Transverse colon (tissue), 4 donors: ENCODE measurements at regions of chr1 and their contacts with region 1.

Region 1: DNA sequence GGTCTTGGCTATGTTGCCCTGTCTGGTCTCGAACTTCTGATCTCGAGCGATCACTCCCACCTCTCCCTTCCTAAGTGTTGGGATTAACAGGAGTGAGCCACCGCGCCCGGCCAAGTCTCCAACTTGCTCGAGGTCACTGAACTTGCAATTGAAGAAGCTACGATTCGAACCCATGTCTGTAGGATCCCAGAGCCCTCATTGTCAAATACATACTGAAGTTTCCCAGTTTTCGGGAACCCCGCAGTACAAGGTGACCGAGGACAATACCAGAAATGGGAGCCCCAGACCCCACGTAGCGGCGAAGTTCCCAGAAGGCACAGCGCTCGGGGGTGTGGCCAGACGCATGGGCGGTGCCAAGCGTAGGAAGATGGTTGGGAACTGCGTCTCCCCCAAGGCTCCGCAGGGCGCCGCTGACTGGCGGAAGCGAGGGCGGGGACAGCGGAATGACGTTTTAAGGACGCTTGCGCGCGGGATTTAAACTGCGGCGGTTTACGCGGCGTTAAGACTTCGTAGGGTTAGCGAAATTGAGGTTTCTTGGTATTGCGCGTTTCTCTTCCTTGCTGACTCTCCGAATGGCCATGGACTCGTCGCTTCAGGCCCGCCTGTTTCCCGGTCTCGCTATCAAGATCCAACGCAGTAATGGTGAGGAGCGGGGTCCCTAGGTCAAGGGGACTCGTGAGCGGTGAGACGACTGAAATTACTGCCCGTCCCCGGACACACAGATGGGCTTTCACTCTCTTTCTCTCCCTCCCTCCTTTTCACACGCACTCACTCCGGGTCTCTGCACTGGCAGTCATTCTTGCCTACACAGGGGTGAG is at the start of gene KIF2C:
- DNase-seq: peak; percentile 98
- H3K4me3 ChIP-seq: peak within 1 kb of the TSS; percentile 44 to 62 (median 50)
- H3K27ac ChIP-seq: peak within 1 kb of the TSS; percentile 86 to 91 (median 91)
- H3K4me1 ChIP-seq: peaks cover 6 to 10% (median 8%) of the 10 kb centered on the region in 4 donors
- H3K27me3 ChIP-seq: no peaks in the 10 kb centered on the region
- CTCF ChIP-seq: peak in 2 of 5 experiments; percentile 4 to 7
- EP300 ChIP-seq: no peak
- POLR2A ChIP-seq: peak; percentile 69
- total RNA-seq, gene KIF2C: 0.95 to 8.0 (median 1.9) TPM in 3 of 4 donors, not detected in the other

Region 2: GRCh38 chr1:44807262-44808062 is 67.9 kb after region 1 on chr1 and contains the start of gene DYNLT4:
- in situ Hi-C with region 1: no loop called
- intact Hi-C with region 1: loop called (anchors 2 kb)
- DNase-seq: peak; percentile 97
- H3K4me3 ChIP-seq: peak within 1 kb of the TSS in 1 of 4 donors; percentile 26
- H3K27ac ChIP-seq: peak within 1 kb of the TSS; percentile 92 to 96 (median 94)
- H3K4me1 ChIP-seq: peaks cover 39 to 59% (median 50%) of the 10 kb centered on the region in 4 donors
- H3K27me3 ChIP-seq: no peaks in the 10 kb centered on the region
- CTCF ChIP-seq: peak in 1 of 5 experiments; percentile 3
- EP300 ChIP-seq: peak; percentile 83
- POLR2A ChIP-seq: peak; percentile 77
- total RNA-seq, gene DYNLT4: 1.4 TPM in 1 of 4 donors, not detected in the others